HepG2 (cell line): ENCODE measurements at regions of chr17 and their contacts with region 1.

Region 1: GRCh38 chr17:31842183-31843069 is 16.6 kb downstream of the COPRS start:
- DNase-seq: peak; percentile 62
- ATAC-seq: peak; percentile 96
- H3K4me3 ChIP-seq: peak overlapping the region; percentile 23 to 45 (median 25); a peak in 5 of 6 replicates
- H3K27ac ChIP-seq: no peak overlapping the region
- H3K4me1 ChIP-seq: peaks cover 34% of the 10 kb centered on the region
- H3K27me3 ChIP-seq: no peaks in the 10 kb centered on the region
- CTCF ChIP-seq: peak; percentile 95
- EP300 ChIP-seq: no peak
- POLR2A ChIP-seq: no peak
- RAD21 ChIP-seq: peak; percentile 98

Region 2: GRCh38 chr17:31558748-31559644 is 283.4 kb before region 1 on chr17:
- CTCF ChIA-PET with region 1: interaction called, 34 read pairs
- POLR2A ChIA-PET with region 1: interaction called, 3 read pairs
- in situ Hi-C with region 1: loop called (anchors 5 kb)
- intact Hi-C with region 1: loop called (anchors 1 kb)
- DNase-seq: peak; percentile 59
- ATAC-seq: peak; percentile 76
- H3K4me3 ChIP-seq: peak overlapping the region; percentile 66 to 73 (median 73)
- H3K27ac ChIP-seq: peak overlapping the region; percentile 58
- H3K4me1 ChIP-seq: peaks cover 44% of the 10 kb centered on the region
- H3K27me3 ChIP-seq: peaks cover 0 to 6% of the 10 kb centered on the region in 2 experiments; a peak in 3 of 5 replicates
- CTCF ChIP-seq: peak; percentile 71
- EP300 ChIP-seq: no peak
- POLR2A ChIP-seq: peak in 1 of 2 experiments; percentile 68; a peak in 2 of 4 replicates
- RAD21 ChIP-seq: peak; percentile 95

Region 3: GRCh38 chr17:31702041-31702440 is 140.4 kb before region 1 on chr17:
- CTCF ChIA-PET with region 1: no interaction called
- POLR2A ChIA-PET with region 1: no interaction called
- in situ Hi-C with region 1: loop called (anchors 10 kb)
- intact Hi-C with region 1: no loop called
- DNase-seq: no peak
- ATAC-seq: no peak
- H3K4me3 ChIP-seq: no peak overlapping the region
- H3K27ac ChIP-seq: no peak overlapping the region
- H3K4me1 ChIP-seq: peaks cover under 1% of the 10 kb centered on the region
- H3K27me3 ChIP-seq: peaks cover 0 to 5% of the 10 kb centered on the region in 2 experiments; a peak in 1 of 5 replicates
- CTCF ChIP-seq: no peak
- EP300 ChIP-seq: no peak
- POLR2A ChIP-seq: no peak
- RAD21 ChIP-seq: no peak

Region 4: DNA sequence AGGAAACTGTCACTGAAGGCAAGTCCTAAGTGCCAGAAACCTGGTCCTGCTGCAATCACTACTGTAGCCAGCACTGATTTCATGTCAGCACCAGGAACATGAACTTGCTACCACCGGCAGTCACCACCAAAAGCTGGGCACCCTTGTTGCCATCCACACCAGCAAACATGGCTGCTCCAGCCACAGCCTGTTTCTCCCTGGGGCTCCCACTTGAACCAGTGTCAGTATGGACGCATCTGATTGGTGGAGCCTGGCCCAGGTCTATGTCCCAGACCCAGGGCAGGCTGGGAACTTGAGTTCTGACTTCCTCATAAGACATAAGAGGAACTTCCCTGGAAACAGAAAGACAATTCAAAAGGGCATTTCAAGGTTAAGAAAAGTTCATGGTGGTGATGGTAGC is 39.9 kb before region 1 on chr17:
- CTCF ChIA-PET with region 1: no interaction called
- POLR2A ChIA-PET with region 1: no interaction called
- in situ Hi-C with region 1: no loop called
- intact Hi-C with region 1: loop called (anchors 1 kb)
- DNase-seq: no peak
- ATAC-seq: no peak
- H3K4me3 ChIP-seq: no peak overlapping the region
- H3K27ac ChIP-seq: peak overlapping the region; percentile 88
- H3K4me1 ChIP-seq: peaks cover 99% of the 10 kb centered on the region
- H3K27me3 ChIP-seq: no peaks in the 10 kb centered on the region
- CTCF ChIP-seq: no peak
- EP300 ChIP-seq: no peak
- POLR2A ChIP-seq: no peak
- RAD21 ChIP-seq: no peak

Region 5: GRCh38 chr17:31888124-31888523 is 45.7 kb after region 1 on chr17:
- CTCF ChIA-PET with region 1: no interaction called
- POLR2A ChIA-PET with region 1: no interaction called
- in situ Hi-C with region 1: no loop called
- intact Hi-C with region 1: no loop called
- DNase-seq: no peak
- ATAC-seq: no peak
- H3K4me3 ChIP-seq: no peak overlapping the region
- H3K27ac ChIP-seq: no peak overlapping the region
- H3K4me1 ChIP-seq: no peaks in the 10 kb centered on the region
- H3K27me3 ChIP-seq: no peaks in the 10 kb centered on the region
- CTCF ChIP-seq: no peak
- EP300 ChIP-seq: no peak
- POLR2A ChIP-seq: no peak
- RAD21 ChIP-seq: no peak